GM12878 (cell line): ENCODE measurements at regions of chr11 and their contacts with region 1.

Region 1: GRCh38 chr11:123640677-123641494 is 13.5 kb downstream of the SCN3B start:
- DNase-seq: no peak
- ATAC-seq: peak; percentile 97
- H3K4me3 ChIP-seq: no peak overlapping the region
- H3K27ac ChIP-seq: no peak overlapping the region
- H3K4me1 ChIP-seq: no peaks in the 10 kb centered on the region
- H3K27me3 ChIP-seq: peaks cover 0 to 2% of the 10 kb centered on the region in 2 experiments; a peak in 2 of 4 replicates
- CTCF ChIP-seq: peak; percentile 77 to 82 (median 80)
- EP300 ChIP-seq: no peak
- POLR2A ChIP-seq: no peak
- RAD21 ChIP-seq: peak; percentile 90

Region 2: GRCh38 chr11:123719452-123719851 is 78.6 kb after region 1 on chr11:
- CTCF ChIA-PET with region 1: interaction called, 12 read pairs
- POLR2A ChIA-PET with region 1: no interaction called
- RAD21 ChIA-PET with region 1: no interaction called
- SMC1A ChIA-PET with region 1: interaction called, 3 read pairs
- in situ Hi-C with region 1: no loop called
- intact Hi-C with region 1: no loop called
- DNase-seq: no peak
- ATAC-seq: no peak
- H3K4me3 ChIP-seq: no peak overlapping the region
- H3K27ac ChIP-seq: no peak overlapping the region
- H3K4me1 ChIP-seq: no peaks in the 10 kb centered on the region
- H3K27me3 ChIP-seq: no peaks in the 10 kb centered on the region
- CTCF ChIP-seq: no peak
- EP300 ChIP-seq: no peak
- POLR2A ChIP-seq: no peak
- RAD21 ChIP-seq: no peak